ENCODE measurements at regions of chr1 and their contacts with region 1.

Region 1: DNA sequence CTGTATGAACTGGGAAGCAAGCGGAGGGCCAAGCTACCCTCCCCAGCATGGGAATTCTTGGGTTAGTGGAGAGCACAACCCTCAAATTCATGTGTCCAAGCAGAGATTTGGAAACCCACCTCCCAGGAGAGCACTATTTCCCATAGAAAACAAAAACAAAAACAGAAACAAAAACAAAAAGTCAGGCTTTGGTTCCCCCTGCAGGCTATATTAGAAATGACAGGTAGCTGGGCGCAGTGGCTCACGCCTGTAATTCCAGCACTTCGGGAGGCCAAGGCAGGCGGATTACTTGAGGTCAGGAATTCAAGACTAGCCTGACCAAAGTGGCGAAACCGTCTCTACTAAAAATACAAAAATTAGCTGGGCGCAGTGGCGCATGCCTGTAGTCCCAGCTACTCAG is 10.8 kb downstream of the MINDY1 start:
- DNase-seq: no peak
- H3K4me3 ChIP-seq: no peak overlapping the region
- H3K27ac ChIP-seq: no peak overlapping the region
- H3K27me3 ChIP-seq: no peaks in the 10 kb centered on the region
- CTCF ChIP-seq: peak; percentile 68

Region 2: DNA sequence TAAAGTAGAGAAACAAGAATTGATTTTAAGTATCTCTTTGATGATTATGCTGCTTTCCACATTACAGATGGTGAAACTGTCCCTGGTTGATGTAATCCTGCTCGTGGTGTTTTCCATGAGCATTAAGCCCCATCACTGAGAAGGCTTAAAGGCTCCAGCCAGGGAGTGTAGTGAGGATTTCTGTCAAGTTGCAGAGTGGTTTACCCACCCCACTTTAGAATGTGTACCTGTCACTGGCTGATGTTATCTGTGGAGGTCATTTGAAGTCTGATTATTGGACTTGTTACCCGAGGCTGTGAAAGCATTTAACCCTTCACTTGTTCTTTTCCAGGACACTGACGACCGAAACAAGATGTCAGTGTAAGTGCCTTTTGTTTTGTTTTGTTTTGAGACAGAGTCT is 34.1 kb before region 1 on chr1:
- CTCF ChIA-PET with region 1: interaction called, 13 read pairs
- POLR2A ChIA-PET with region 1: interaction called, 3 read pairs
- DNase-seq: no peak
- H3K4me3 ChIP-seq: no peak overlapping the region
- H3K27ac ChIP-seq: peak overlapping the region; percentile 21
- H3K27me3 ChIP-seq: no peaks in the 10 kb centered on the region
- CTCF ChIP-seq: no peak

Region 3: DNA sequence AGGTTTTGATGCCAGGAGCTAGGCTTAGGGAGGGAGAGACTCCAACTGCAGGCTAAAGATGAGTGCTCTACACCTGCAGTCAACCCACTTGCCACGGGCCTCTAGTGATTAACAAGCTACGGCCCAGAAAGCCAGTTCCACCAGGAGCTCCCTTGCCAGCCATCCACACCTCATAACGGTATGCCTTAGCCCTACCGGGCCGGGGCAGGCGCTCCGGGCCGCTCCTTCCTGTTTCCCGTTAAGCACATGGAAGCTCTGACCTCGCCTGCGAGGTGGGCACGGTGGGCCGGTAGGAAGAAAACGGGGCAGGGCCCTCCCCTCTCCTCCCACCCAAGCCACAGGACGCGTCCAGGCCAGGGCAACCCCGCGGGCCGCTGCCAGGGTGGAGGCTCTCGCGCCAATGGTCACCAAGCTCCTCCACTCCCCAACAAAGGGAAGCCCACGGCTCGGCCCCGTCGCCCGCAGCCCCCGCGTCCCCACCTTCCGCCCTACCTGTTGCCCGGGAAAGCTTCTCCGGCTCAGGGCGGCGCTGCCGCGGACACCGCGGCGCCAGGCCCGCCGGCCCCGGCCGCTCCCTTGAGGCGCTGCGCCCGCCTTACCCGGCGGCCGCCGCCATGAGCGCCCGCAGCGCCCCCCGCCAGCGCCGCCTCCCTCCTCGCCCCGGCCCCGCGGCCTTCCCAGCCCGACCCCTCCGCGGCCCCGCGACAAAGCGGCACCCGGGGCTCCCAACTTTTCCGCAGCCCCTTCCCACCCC is 21.9 kb before region 1 on chr1:
- CTCF ChIA-PET with region 1: interaction called, 60 read pairs
- POLR2A ChIA-PET with region 1: interaction called, 10 read pairs
- DNase-seq: no peak
- H3K4me3 ChIP-seq: peak overlapping the region; percentile 81
- H3K27ac ChIP-seq: peak overlapping the region; percentile 70
- H3K27me3 ChIP-seq: no peaks in the 10 kb centered on the region
- CTCF ChIP-seq: no peak

Region 4: DNA sequence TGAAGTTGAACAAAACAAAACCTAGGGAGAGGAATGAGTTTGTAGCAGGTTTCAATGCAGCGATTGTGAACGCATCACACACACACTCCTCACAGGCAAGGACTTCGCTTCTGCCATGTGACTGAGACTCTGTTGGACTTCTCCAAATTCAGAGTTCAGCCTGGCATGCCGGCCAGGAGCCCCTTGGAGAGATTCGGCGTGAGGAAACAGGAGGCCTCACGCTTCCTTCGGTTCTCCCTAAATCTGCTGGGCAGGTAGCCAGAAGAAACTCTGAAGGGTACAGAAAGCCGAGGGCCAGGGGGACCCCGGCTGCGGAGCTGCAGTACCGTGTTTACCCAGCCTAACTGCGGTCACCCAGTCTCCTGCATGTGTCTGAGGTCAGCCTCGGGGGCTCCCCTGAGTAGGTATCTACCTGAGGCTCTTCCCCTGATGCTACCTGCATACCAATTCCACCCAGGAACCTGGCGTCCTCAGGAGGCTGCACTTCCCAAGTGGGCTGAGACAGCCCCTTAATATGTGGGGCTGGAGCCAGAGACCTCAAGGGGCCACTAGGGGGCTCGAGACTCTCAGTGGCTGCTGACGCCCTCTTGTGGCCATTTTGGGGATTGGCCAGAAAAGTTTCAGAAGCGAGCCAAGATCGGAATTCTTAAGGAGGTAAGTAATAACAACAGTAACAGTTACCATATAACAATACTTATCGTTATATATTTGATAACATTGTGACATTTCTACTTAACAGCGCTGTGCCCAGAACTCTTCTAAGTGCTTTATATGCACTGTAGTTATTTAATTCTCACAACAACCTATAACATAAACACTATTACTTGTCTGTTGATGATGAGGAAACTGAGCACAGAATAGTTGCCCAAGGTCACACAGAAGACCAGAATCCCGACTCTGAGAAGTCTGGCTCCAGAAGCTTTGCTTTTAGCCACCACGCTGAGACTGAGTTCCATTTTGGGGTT is 16.5 kb before region 1 on chr1:
- CTCF ChIA-PET with region 1: interaction called, 60 read pairs
- POLR2A ChIA-PET with region 1: interaction called, 3 read pairs
- DNase-seq: peak; percentile 75
- H3K4me3 ChIP-seq: no peak overlapping the region
- H3K27ac ChIP-seq: no peak overlapping the region
- H3K27me3 ChIP-seq: no peaks in the 10 kb centered on the region
- CTCF ChIP-seq: peak; percentile 100

Region 5: GRCh38 chr1:151006327-151007052 is 10.6 kb after region 1 on chr1 and contains the start of gene MINDY1:
- CTCF ChIA-PET with region 1: interaction called, 63 read pairs
- POLR2A ChIA-PET with region 1: interaction called, 8 read pairs
- DNase-seq: peak; percentile 63
- H3K4me3 ChIP-seq: peak within 1 kb of the TSS; percentile 70
- H3K27ac ChIP-seq: peak within 1 kb of the TSS; percentile 66
- H3K27me3 ChIP-seq: no peaks in the 10 kb centered on the region
- CTCF ChIP-seq: peak; percentile 72
- polyA plus RNA-seq, gene MINDY1: 12.8 and 18.0 TPM in 2 replicates